ENCODE measurements at regions of chr7 and their contacts with region 1.

Region 1: GRCh38 chr7:13279854-13280435 is 592.5 kb downstream of the ARL4A start:
- DNase-seq: no peak
- ATAC-seq: no peak
- H3K4me3 ChIP-seq: no peak overlapping the region
- H3K27ac ChIP-seq: no peak overlapping the region
- H3K4me1 ChIP-seq: no peaks in the 10 kb centered on the region
- H3K27me3 ChIP-seq: no peaks in the 10 kb centered on the region
- CTCF ChIP-seq: peak in 1 of 3 experiments; percentile 20; a peak in 1 of 6 replicates
- EP300 ChIP-seq: no peak
- POLR2A ChIP-seq: no peak
- RAD21 ChIP-seq: peak; percentile 39; the same call in 1 of the 2 replicates

Region 2: DNA sequence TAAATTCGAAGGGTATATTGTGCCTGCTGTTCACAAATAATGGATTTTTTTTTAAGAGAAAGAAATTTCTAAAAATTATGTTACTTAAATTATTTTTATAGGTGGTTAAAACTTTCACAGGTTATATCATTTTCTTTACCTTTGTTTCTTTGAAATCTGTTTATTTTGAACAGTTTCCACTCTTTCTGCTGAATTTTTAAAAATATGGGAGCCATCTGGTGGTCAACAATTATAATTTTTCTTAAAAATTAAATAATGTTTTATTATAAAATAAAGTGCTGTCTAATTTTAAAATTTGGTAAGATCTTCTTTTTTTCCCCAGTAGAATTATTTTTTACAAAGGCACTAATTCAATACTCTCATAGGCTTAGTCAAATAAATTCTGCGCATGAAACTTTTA is 445.6 kb after region 1 on chr7:
- CTCF ChIA-PET with region 1: no interaction called
- POLR2A ChIA-PET with region 1: no interaction called
- RAD21 ChIA-PET with region 1: no interaction called
- SMC1A ChIA-PET with region 1: no interaction called
- in situ Hi-C with region 1: loop called (anchors 25 kb)
- intact Hi-C with region 1: loop called (anchors 5 kb)
- DNase-seq: no peak
- ATAC-seq: no peak
- H3K4me3 ChIP-seq: no peak overlapping the region
- H3K27ac ChIP-seq: no peak overlapping the region
- H3K4me1 ChIP-seq: no peaks in the 10 kb centered on the region
- H3K27me3 ChIP-seq: no peaks in the 10 kb centered on the region
- CTCF ChIP-seq: no peak
- EP300 ChIP-seq: no peak
- POLR2A ChIP-seq: no peak
- RAD21 ChIP-seq: no peak

Region 3: GRCh38 chr7:13742811-13743210 is 462.9 kb after region 1 on chr7:
- CTCF ChIA-PET with region 1: interaction called, 41 read pairs
- POLR2A ChIA-PET with region 1: no interaction called
- RAD21 ChIA-PET with region 1: interaction called, 4 read pairs
- SMC1A ChIA-PET with region 1: interaction called, 3 read pairs
- in situ Hi-C with region 1: loop called (anchors 25 kb)
- intact Hi-C with region 1: loop called (anchors 5 kb)
- DNase-seq: no peak
- ATAC-seq: peak; percentile 61
- H3K4me3 ChIP-seq: no peak overlapping the region
- H3K27ac ChIP-seq: no peak overlapping the region
- H3K4me1 ChIP-seq: no peaks in the 10 kb centered on the region
- H3K27me3 ChIP-seq: no peaks in the 10 kb centered on the region
- CTCF ChIP-seq: peak in 1 of 3 experiments; percentile 39; a peak in 1 of 6 replicates
- EP300 ChIP-seq: no peak
- POLR2A ChIP-seq: no peak
- RAD21 ChIP-seq: peak; percentile 17; the same call in 1 of the 2 replicates

Region 4: DNA sequence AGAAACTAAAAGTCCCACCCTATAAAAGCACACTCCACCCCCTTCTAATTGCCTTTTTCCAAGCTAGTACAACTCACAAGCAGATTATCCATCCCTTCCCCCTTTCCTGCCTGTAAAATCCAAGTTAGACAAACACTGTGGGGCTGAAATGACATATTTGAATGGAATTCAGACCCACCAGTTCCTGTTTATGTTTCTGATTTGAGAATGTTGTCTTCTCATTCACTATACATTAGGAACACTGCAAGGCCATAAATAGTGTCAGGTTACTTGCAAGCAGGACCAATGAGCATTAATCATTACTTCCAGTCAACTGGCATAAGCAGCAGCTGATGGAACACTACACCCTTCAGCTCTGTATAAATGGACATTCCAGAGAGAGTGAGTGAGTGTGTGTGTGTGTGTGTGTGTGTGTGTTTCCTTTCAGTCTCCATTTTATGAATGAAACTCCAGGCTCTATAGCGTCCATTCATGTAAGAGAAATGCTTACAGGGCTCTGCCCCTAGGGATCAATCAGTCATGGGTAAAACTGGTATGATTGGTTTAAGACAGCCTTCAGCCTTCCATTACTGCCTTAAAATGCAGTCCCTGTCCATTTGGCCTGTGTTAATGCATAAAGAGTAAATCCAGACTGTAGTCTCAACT is 640.2 kb after region 1 on chr7:
- CTCF ChIA-PET with region 1: no interaction called
- POLR2A ChIA-PET with region 1: no interaction called
- RAD21 ChIA-PET with region 1: no interaction called
- SMC1A ChIA-PET with region 1: no interaction called
- in situ Hi-C with region 1: no loop called
- intact Hi-C with region 1: no loop called
- DNase-seq: no peak
- ATAC-seq: peak; percentile 31; the same call in 2 of the 3 replicates
- H3K4me3 ChIP-seq: no peak overlapping the region
- H3K27ac ChIP-seq: no peak overlapping the region
- H3K4me1 ChIP-seq: no peaks in the 10 kb centered on the region
- H3K27me3 ChIP-seq: no peaks in the 10 kb centered on the region
- CTCF ChIP-seq: no peak
- EP300 ChIP-seq: no peak
- POLR2A ChIP-seq: no peak
- RAD21 ChIP-seq: no peak

Region 5: GRCh38 chr7:14457568-14458453 is 1177.9 kb after region 1 on chr7:
- CTCF ChIA-PET with region 1: interaction called, 13 read pairs
- POLR2A ChIA-PET with region 1: no interaction called
- RAD21 ChIA-PET with region 1: interaction called, 4 read pairs
- SMC1A ChIA-PET with region 1: interaction called, 4 read pairs
- in situ Hi-C with region 1: loop called (anchors 10 kb)
- intact Hi-C with region 1: loop called (anchors 5 kb)
- DNase-seq: no peak
- ATAC-seq: peak; percentile 74
- H3K4me3 ChIP-seq: no peak overlapping the region
- H3K27ac ChIP-seq: no peak overlapping the region
- H3K4me1 ChIP-seq: no peaks in the 10 kb centered on the region
- H3K27me3 ChIP-seq: no peaks in the 10 kb centered on the region
- CTCF ChIP-seq: peak; percentile 70 to 77 (median 74)
- EP300 ChIP-seq: no peak
- POLR2A ChIP-seq: no peak
- RAD21 ChIP-seq: peak; percentile 64

Region 6: GRCh38 chr7:15015545-15016326 is 1735.8 kb after region 1 on chr7:
- CTCF ChIA-PET with region 1: interaction called, 11 read pairs
- POLR2A ChIA-PET with region 1: no interaction called
- RAD21 ChIA-PET with region 1: no interaction called
- SMC1A ChIA-PET with region 1: no interaction called
- in situ Hi-C with region 1: loop called (anchors 25 kb)
- intact Hi-C with region 1: no loop called
- DNase-seq: peak; percentile 5
- ATAC-seq: peak; percentile 97
- H3K4me3 ChIP-seq: no peak overlapping the region
- H3K27ac ChIP-seq: no peak overlapping the region
- H3K4me1 ChIP-seq: no peaks in the 10 kb centered on the region
- H3K27me3 ChIP-seq: no peaks in the 10 kb centered on the region
- CTCF ChIP-seq: peak; percentile 54 to 57 (median 54); a peak in 5 of 6 replicates
- EP300 ChIP-seq: no peak
- POLR2A ChIP-seq: no peak
- RAD21 ChIP-seq: peak; percentile 56

Measured in GM12878 (cell line).